ENCODE measurements at regions of chrX and their contacts with region 1.

Region 1: DNA sequence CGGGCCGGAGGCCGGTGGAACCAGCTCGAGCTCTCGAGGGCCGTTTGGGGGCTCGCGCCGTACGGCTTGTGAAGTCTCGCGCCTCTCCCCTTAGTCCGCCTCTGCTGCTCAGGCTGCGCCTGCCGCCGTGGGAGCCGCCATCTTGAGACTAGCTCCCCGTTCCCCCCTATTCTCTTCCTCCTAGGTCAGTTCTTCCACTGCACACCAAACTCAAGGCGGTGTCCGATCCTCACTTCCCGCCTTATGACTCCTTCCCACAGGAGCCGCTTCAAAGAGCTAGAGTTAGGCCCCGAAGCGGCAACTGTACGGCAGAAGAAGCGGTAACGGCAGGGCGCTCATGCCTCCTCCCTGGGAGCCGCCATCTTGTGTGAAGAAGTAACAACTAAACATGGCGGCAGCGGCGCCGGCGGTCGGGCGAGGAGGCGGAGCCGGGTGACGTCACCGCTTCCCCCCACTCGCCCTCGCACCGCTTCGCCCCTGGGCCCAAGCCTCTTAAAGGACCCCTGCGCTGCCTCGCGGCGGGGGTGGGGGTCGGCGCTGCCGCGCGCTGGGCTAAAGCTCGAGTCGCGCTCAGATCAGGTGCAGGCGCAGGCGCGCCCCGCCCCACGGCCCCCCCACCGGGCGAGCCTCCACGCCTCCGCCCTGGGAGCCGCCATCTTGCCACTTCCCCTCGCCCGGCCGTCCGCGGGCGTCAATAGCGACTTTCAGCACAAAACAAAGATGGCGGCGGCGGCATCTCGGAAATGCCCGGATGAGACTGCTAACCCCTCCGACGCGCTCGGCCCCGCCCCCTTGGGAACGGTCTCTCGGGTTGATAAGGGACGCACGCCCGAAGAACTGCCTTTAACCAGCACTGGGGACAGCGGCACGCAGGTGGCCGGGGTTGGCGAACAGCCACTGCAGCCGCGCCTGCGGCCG is at the start of gene HCFC1:
- DNase-seq: peak; percentile 84
- ATAC-seq: peak; percentile 40
- H3K4me3 ChIP-seq: peak within 1 kb of the TSS; percentile 96
- H3K27ac ChIP-seq: peak within 1 kb of the TSS; percentile 100
- H3K4me1 ChIP-seq: peaks cover 19% of the 10 kb centered on the region
- H3K27me3 ChIP-seq: no peaks in the 10 kb centered on the region
- CTCF ChIP-seq: no peak
- POLR2A ChIP-seq: peak; percentile 82
- RAD21 ChIP-seq: no peak
- total RNA-seq, gene HCFC1: 3.2 and 4.4 TPM in 2 replicates

Region 2: DNA sequence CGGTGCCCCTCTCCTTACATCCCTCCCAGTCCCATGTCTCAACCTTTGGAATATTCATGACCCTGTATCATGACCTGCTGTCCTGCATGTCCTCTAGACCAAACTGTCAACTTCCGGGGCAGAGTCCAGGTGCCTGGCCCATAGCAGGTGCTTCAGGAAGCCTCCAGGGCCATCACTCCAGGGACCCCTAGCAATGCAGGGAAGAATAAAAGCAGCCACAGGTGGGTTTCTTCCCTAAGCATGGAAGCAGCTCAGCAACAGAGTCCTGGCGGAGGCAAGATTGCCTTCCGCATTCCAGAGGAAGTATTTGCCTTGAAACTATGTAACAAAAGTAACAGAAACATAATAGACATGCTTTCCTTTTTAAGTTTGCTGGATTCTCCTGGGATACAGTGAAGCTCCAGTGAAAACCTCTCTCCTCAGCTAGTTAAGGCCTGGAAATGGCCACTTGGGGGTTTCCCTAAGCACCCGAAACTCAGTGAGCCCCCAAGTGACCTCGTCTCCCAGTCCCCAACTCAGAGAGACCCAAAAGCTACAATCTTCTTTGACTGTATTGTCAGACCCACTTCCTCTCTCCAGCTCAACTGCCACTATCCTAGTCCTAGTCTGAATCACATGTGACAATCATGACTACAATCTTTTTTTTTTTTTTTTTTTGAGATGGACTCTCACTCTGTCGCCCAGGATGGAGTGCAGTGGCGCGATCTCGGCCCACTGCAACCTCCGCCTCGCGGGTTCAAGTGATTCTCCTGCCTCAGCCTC is 455.5 kb after region 1 on chrX:
- CTCF ChIA-PET with region 1: no interaction called
- POLR2A ChIA-PET with region 1: interaction called, 11 read pairs
- dilution Hi-C with region 1: no loop called
- in situ Hi-C with region 1: no loop called
- intact Hi-C with region 1: no loop called
- DNase-seq: no peak
- ATAC-seq: no peak
- H3K4me3 ChIP-seq: no peak overlapping the region
- H3K27ac ChIP-seq: no peak overlapping the region
- H3K4me1 ChIP-seq: peaks cover 2% of the 10 kb centered on the region; the same call in 1 of the 2 replicates
- H3K27me3 ChIP-seq: no peaks in the 10 kb centered on the region
- CTCF ChIP-seq: no peak
- POLR2A ChIP-seq: no peak
- RAD21 ChIP-seq: no peak